CD8-positive, alpha-beta T cell (primary cell): ENCODE measurements at regions of chr1 and their contacts with region 1.

Region 1: DNA sequence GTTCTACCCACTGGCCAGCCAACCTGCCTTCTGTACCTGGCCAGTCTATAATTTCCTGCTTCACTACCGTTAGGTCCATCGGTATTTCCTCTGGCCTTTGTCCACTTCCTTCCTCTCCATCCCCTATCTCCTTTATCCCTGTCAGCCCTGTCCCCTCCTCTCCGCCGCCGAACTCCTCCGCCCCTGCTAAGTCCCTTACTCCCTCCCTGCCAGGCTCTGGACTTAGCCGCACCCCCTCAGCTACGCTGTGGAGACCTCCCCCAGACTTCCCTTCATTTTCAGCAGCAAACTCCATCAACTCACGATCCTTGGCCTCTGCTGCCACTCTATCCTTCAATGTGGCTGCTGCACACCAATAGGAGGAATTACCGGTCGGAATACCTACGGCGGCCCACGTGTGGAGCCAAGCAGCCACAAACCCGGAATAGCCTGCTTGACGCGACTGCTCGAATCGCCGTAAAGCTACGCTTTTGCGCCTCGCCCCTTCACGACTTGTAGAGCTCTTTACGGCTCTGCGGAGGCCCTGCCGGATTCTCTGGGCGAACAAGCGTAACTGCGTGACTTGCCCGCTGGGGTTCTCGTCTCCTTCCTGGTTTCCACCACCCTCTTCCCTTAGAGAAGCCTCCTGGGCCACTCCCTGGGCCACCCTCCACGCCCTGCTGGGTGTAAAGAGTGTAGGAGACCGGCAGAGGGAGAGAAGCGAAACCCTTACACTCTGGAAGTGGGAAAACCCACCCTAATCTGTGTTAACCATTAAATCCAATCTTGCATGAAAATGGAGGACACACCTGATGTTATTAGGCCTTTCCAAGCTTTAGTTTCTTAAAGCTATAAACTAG is at the start of gene ZNHIT6:
- DNase-seq: peak; percentile 72 to 95 (median 84)
- ATAC-seq: peak; percentile 95
- H3K4me3 ChIP-seq: peak within 1 kb of the TSS; percentile 89 to 93
- H3K4me3 Mint-ChIP-seq: no peak within 1 kb of the TSS
- H3K27ac ChIP-seq: peak within 1 kb of the TSS; percentile 67 to 79
- H3K27ac Mint-ChIP-seq: no peak within 1 kb of the TSS
- H3K4me1 ChIP-seq: peaks cover 17% of the 10 kb centered on the region
- H3K4me1 Mint-ChIP-seq: peaks cover 30% of the 10 kb centered on the region
- H3K27me3 ChIP-seq: no peaks in the 10 kb centered on the region
- H3K27me3 Mint-ChIP-seq: no peaks in the 10 kb centered on the region
- CTCF ChIP-seq: no peak
- total RNA-seq, gene ZNHIT6: 14.4 to 15.3 TPM

Region 2: GRCh38 chr1:84090447-84091245 is 1617.6 kb before region 1 on chr1:
- CTCF ChIA-PET with region 1: no interaction called
- POLR2A ChIA-PET with region 1: no interaction called
- intact Hi-C with region 1: loop called (anchors 10 kb)
- DNase-seq: peak in 5 of 9 experiments; percentile 4 to 72 (median 46)
- ATAC-seq: peak; percentile 80
- H3K4me3 ChIP-seq: peak overlapping the region; percentile 25 to 40
- H3K4me3 Mint-ChIP-seq: peak overlapping the region; percentile 81
- H3K27ac ChIP-seq: peak overlapping the region; percentile 49 to 73
- H3K27ac Mint-ChIP-seq: peak overlapping the region; percentile 89
- H3K4me1 ChIP-seq: peaks cover 19% of the 10 kb centered on the region
- H3K4me1 Mint-ChIP-seq: peaks cover 31% of the 10 kb centered on the region
- H3K27me3 ChIP-seq: no peaks in the 10 kb centered on the region
- H3K27me3 Mint-ChIP-seq: no peaks in the 10 kb centered on the region
- CTCF ChIP-seq: no peak

Region 3: GRCh38 chr1:84573967-84574842 is 1134.0 kb before region 1 on chr1 and contains the start of gene CTBS:
- CTCF ChIA-PET with region 1: no interaction called
- POLR2A ChIA-PET with region 1: no interaction called
- intact Hi-C with region 1: loop called in 1 of 2 experiments (anchors 10 kb)
- DNase-seq: peak; percentile 67 to 93 (median 85)
- ATAC-seq: peak; percentile 91
- H3K4me3 ChIP-seq: peak within 1 kb of the TSS; percentile 81 to 92
- H3K4me3 Mint-ChIP-seq: peak within 1 kb of the TSS; percentile 96
- H3K27ac ChIP-seq: peak within 1 kb of the TSS; percentile 94 to 96
- H3K27ac Mint-ChIP-seq: peak within 1 kb of the TSS; percentile 99
- H3K4me1 ChIP-seq: peaks cover 20% of the 10 kb centered on the region
- H3K4me1 Mint-ChIP-seq: peaks cover 42% of the 10 kb centered on the region
- H3K27me3 ChIP-seq: no peaks in the 10 kb centered on the region
- H3K27me3 Mint-ChIP-seq: no peaks in the 10 kb centered on the region
- CTCF ChIP-seq: no peak
- total RNA-seq, gene CTBS: 17.3 to 19.7 TPM

Region 4: GRCh38 chr1:85623051-85623471 is 85.1 kb before region 1 on chr1:
- CTCF ChIA-PET with region 1: no interaction called
- POLR2A ChIA-PET with region 1: no interaction called
- intact Hi-C with region 1: no loop called
- DNase-seq: no peak
- ATAC-seq: no peak
- H3K4me3 ChIP-seq: no peak overlapping the region
- H3K4me3 Mint-ChIP-seq: no peak overlapping the region
- H3K27ac ChIP-seq: no peak overlapping the region
- H3K27ac Mint-ChIP-seq: no peak overlapping the region
- H3K4me1 ChIP-seq: no peaks in the 10 kb centered on the region
- H3K4me1 Mint-ChIP-seq: no peaks in the 10 kb centered on the region
- H3K27me3 ChIP-seq: no peaks in the 10 kb centered on the region
- H3K27me3 Mint-ChIP-seq: no peaks in the 10 kb centered on the region
- CTCF ChIP-seq: no peak

Region 5: DNA sequence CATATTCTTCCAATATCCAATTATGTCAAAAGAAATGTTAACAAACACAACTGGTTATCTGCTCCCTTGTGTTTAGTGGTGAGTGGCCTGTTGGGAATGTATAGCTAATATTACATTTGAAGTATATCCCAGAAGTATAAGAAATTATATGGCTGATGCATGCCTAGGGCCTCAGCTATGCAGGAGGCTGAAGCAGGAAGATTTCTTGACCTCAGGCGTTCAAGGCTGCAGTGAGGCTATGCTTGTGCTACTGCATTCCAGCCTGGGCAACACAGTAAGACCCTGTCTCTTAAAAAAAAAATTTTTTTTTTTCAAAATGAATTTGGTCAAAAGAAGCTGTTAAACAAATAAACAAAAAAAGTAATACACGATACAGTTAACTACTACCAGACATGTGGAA is 37.0 kb before region 1 on chr1:
- CTCF ChIA-PET with region 1: no interaction called
- POLR2A ChIA-PET with region 1: no interaction called
- intact Hi-C with region 1: no loop called
- DNase-seq: no peak
- ATAC-seq: no peak
- H3K4me3 ChIP-seq: no peak overlapping the region
- H3K4me3 Mint-ChIP-seq: no peak overlapping the region
- H3K27ac ChIP-seq: no peak overlapping the region
- H3K27ac Mint-ChIP-seq: no peak overlapping the region
- H3K4me1 ChIP-seq: no peaks in the 10 kb centered on the region
- H3K4me1 Mint-ChIP-seq: peaks cover 4% of the 10 kb centered on the region
- H3K27me3 ChIP-seq: no peaks in the 10 kb centered on the region
- H3K27me3 Mint-ChIP-seq: no peaks in the 10 kb centered on the region
- CTCF ChIP-seq: no peak

Region 6: GRCh38 chr1:86339014-86339812 is 631.0 kb after region 1 on chr1:
- CTCF ChIA-PET with region 1: no interaction called
- POLR2A ChIA-PET with region 1: no interaction called
- intact Hi-C with region 1: no loop called
- DNase-seq: peak in 1 of 9 experiments; percentile 7
- ATAC-seq: no peak
- H3K4me3 ChIP-seq: no peak overlapping the region
- H3K4me3 Mint-ChIP-seq: no peak overlapping the region
- H3K27ac ChIP-seq: no peak overlapping the region
- H3K27ac Mint-ChIP-seq: no peak overlapping the region
- H3K4me1 ChIP-seq: no peaks in the 10 kb centered on the region
- H3K4me1 Mint-ChIP-seq: no peaks in the 10 kb centered on the region
- H3K27me3 ChIP-seq: no peaks in the 10 kb centered on the region
- H3K27me3 Mint-ChIP-seq: peaks cover 3% of the 10 kb centered on the region
- CTCF ChIP-seq: no peak

Region 7: DNA sequence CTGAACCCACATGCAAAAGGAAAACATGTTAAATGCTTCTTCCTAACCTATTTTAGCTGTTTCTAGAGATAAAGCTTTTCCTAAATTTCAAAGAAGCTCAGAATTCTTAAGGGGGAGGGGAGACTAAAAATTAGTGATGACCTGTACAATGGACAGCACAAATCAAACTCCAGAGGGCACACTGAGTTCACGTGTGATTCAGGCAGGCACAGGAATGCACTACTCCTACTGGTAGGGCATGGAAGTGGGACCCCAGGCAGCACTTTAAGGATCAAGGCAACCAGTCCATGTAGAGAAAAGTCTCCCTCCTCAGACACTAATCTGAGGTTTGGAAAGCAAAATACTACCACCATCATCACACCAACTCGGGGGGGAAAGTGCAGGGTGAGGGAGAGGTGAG is 807.4 kb after region 1 on chr1:
- CTCF ChIA-PET with region 1: no interaction called
- POLR2A ChIA-PET with region 1: no interaction called
- intact Hi-C with region 1: no loop called
- DNase-seq: peak in 1 of 9 experiments; percentile 27
- ATAC-seq: no peak
- H3K4me3 ChIP-seq: no peak overlapping the region
- H3K4me3 Mint-ChIP-seq: no peak overlapping the region
- H3K27ac ChIP-seq: no peak overlapping the region
- H3K27ac Mint-ChIP-seq: no peak overlapping the region
- H3K4me1 ChIP-seq: no peaks in the 10 kb centered on the region
- H3K4me1 Mint-ChIP-seq: no peaks in the 10 kb centered on the region
- H3K27me3 ChIP-seq: no peaks in the 10 kb centered on the region
- H3K27me3 Mint-ChIP-seq: no peaks in the 10 kb centered on the region
- CTCF ChIP-seq: no peak

Region 8: GRCh38 chr1:87335175-87335884 is 1627.1 kb after region 1 on chr1:
- CTCF ChIA-PET with region 1: no interaction called
- POLR2A ChIA-PET with region 1: no interaction called
- intact Hi-C with region 1: loop called in 1 of 2 experiments (anchors 10 kb)
- DNase-seq: peak in 8 of 9 experiments; percentile 48 to 77 (median 64)
- ATAC-seq: peak; percentile 53
- H3K4me3 ChIP-seq: peak overlapping the region; percentile 53 to 60
- H3K4me3 Mint-ChIP-seq: peak overlapping the region; percentile 89
- H3K27ac ChIP-seq: peak overlapping the region; percentile 14 to 62
- H3K27ac Mint-ChIP-seq: peak overlapping the region; percentile 90
- H3K4me1 ChIP-seq: peaks cover 35% of the 10 kb centered on the region
- H3K4me1 Mint-ChIP-seq: peaks cover 56% of the 10 kb centered on the region
- H3K27me3 ChIP-seq: no peaks in the 10 kb centered on the region
- H3K27me3 Mint-ChIP-seq: no peaks in the 10 kb centered on the region
- CTCF ChIP-seq: no peak